HepG2 (cell line): ENCODE measurements at regions of chr5 and their contacts with region 1.

Region 1: GRCh38 chr5:122346897-122347581 is 35.0 kb downstream of the SNCAIP start:
- DNase-seq: no peak
- ATAC-seq: no peak
- H3K4me3 ChIP-seq: no peak overlapping the region
- H3K27ac ChIP-seq: no peak overlapping the region
- H3K4me1 ChIP-seq: no peaks in the 10 kb centered on the region
- H3K27me3 ChIP-seq: no peaks in the 10 kb centered on the region; a peak in 1 of 5 replicates
- CTCF ChIP-seq: no peak
- EP300 ChIP-seq: no peak
- POLR2A ChIP-seq: no peak
- RAD21 ChIP-seq: no peak

Region 2: DNA sequence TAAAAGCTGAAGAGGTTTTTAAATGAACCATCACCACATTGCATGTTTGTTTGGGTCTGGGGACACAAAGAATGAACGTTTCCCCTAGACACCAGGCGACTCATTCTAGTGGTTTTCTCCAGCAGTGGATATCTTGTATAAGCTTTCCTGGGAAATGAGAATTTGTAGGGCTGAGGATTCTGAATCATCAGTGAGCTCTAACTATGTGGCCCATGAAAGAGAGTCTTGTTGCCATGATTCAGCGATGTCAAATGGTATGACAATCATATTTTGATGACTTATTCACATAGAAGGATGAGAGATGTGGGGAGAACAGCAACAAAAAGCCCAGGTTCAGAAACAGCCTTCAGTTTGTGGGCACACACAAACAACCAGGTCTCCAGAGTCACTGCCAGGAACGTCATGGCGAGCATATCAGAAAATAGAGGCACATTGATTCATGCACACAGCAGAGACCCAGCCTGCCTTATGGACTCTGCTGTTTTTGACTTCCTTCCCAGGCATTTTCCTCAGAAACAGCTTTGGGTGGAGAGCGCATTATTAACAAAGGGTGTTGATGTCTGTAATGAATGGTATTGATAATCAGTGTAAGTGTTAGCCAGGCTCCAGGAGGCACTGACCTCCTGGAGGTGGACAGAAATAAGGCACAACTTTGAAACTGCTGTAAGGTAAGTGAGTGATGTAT is 204.4 kb before region 1 on chr5:
- CTCF ChIA-PET with region 1: no interaction called
- POLR2A ChIA-PET with region 1: no interaction called
- in situ Hi-C with region 1: no loop called
- intact Hi-C with region 1: no loop called
- DNase-seq: no peak
- ATAC-seq: no peak
- H3K4me3 ChIP-seq: no peak overlapping the region
- H3K27ac ChIP-seq: no peak overlapping the region
- H3K4me1 ChIP-seq: no peaks in the 10 kb centered on the region
- H3K27me3 ChIP-seq: no peaks in the 10 kb centered on the region
- CTCF ChIP-seq: no peak
- EP300 ChIP-seq: no peak
- POLR2A ChIP-seq: no peak
- RAD21 ChIP-seq: no peak

Region 3: DNA sequence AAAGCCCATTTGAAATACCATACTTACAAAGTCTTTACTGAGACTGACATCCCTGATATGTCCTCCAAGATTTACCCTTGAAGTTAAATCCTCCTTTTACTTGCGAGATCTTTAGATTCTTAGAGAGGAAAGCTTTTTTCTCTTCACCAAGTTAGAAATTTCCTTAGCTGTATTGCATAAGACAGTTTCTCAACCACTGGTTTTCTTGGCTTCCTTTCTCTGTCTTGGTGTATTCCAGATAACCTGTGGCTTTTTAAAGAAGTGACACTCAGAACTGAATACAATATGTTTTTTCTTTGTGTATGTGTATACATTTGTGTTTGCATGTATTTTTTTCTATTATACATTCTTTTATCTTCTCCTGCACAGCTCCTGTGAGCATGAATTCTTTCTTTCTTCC is 30.0 kb after region 1 on chr5:
- CTCF ChIA-PET with region 1: no interaction called
- POLR2A ChIA-PET with region 1: no interaction called
- in situ Hi-C with region 1: no loop called
- intact Hi-C with region 1: no loop called
- DNase-seq: no peak
- ATAC-seq: no peak
- H3K4me3 ChIP-seq: no peak overlapping the region
- H3K27ac ChIP-seq: no peak overlapping the region
- H3K4me1 ChIP-seq: no peaks in the 10 kb centered on the region
- H3K27me3 ChIP-seq: no peaks in the 10 kb centered on the region
- CTCF ChIP-seq: no peak
- EP300 ChIP-seq: no peak
- POLR2A ChIP-seq: no peak
- RAD21 ChIP-seq: no peak

Region 4: DNA sequence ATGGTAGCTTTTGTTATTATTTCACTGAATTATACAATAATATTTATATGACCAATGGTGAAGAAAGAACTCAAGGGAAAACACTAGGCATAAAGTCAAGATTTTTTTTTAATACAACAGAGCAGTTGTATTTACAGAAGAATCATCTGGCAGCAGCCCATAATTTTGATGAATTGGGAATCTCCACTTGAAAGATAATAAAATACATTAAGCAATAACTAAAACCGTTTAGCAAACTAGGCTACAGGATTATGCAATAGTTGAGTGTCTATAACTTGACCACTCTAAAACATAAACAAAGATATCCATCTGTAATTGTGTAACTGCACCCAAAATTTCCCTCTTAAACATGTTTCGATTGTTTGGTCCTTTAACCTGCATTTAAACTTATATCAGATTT is 45.8 kb after region 1 on chr5:
- CTCF ChIA-PET with region 1: no interaction called
- POLR2A ChIA-PET with region 1: no interaction called
- in situ Hi-C with region 1: no loop called
- intact Hi-C with region 1: loop called (anchors 1 kb)
- DNase-seq: no peak
- ATAC-seq: no peak
- H3K4me3 ChIP-seq: no peak overlapping the region
- H3K27ac ChIP-seq: no peak overlapping the region
- H3K4me1 ChIP-seq: no peaks in the 10 kb centered on the region
- H3K27me3 ChIP-seq: no peaks in the 10 kb centered on the region
- CTCF ChIP-seq: no peak
- EP300 ChIP-seq: no peak
- POLR2A ChIP-seq: no peak
- RAD21 ChIP-seq: no peak

Region 5: GRCh38 chr5:122442938-122443337 is 95.9 kb after region 1 on chr5:
- CTCF ChIA-PET with region 1: no interaction called
- POLR2A ChIA-PET with region 1: no interaction called
- in situ Hi-C with region 1: no loop called
- intact Hi-C with region 1: no loop called
- DNase-seq: no peak
- ATAC-seq: no peak
- H3K4me3 ChIP-seq: no peak overlapping the region
- H3K27ac ChIP-seq: no peak overlapping the region
- H3K4me1 ChIP-seq: no peaks in the 10 kb centered on the region
- H3K27me3 ChIP-seq: no peaks in the 10 kb centered on the region
- CTCF ChIP-seq: no peak
- EP300 ChIP-seq: no peak
- POLR2A ChIP-seq: no peak
- RAD21 ChIP-seq: no peak